HEK293 (cell line): ENCODE measurements at regions of chr10 and their contacts with region 1.

Region 1: DNA sequence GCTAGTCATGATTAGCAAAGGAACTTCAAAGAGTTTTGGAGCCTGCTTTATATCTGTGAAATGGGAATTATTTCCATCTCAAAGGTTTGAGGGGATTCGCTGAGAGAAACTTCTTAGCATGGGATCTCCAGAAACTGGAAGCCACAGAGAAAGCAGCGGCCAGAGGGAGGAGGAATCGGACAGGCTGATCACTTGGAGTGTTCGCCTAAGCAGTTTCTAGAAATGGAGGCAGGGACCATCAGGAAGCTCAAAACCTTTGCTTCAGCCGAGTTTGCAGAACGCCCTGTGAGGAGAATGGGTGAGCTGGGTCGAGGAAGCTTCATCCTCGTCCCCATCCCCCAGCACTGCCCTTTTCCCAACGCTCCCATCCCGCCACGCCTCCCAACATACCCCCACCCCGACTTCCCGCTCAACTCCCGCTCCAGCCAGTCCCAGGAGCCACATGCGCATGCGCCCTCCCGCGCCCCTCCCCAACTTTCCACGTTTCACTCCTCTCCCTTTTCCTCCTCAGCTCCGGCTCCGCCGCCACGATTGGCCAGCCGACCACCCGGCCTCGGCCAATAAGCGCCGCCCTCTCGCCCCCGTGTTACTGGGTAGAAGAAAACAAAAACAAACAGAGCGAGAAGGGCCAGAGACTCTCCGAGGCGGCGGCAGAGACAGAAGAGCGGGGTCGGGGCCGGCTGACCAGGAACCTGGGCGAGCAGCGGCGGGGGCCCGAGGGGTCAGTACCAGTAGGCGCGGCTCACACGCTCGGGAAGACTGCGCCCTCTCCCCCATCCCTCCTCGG is at the start of gene PDCD4:
- H3K4me3 ChIP-seq: peak within 1 kb of the TSS; percentile 84
- H3K27ac ChIP-seq: peak within 1 kb of the TSS; percentile 84
- H3K4me1 ChIP-seq: peaks cover 15% of the 10 kb centered on the region
- CTCF ChIP-seq: no peak

Region 2: GRCh38 chr10:110803830-110804338 is 67.6 kb before region 1 on chr10:
- CTCF ChIA-PET with region 1: interaction called, 3 read pairs
- POLR2A ChIA-PET with region 1: interaction called, 12 read pairs
- H3K4me3 ChIP-seq: no peak overlapping the region
- H3K27ac ChIP-seq: no peak overlapping the region
- H3K4me1 ChIP-seq: peaks cover 12% of the 10 kb centered on the region
- CTCF ChIP-seq: peak; percentile 58; the same call in 1 of the 2 replicates

Region 3: DNA sequence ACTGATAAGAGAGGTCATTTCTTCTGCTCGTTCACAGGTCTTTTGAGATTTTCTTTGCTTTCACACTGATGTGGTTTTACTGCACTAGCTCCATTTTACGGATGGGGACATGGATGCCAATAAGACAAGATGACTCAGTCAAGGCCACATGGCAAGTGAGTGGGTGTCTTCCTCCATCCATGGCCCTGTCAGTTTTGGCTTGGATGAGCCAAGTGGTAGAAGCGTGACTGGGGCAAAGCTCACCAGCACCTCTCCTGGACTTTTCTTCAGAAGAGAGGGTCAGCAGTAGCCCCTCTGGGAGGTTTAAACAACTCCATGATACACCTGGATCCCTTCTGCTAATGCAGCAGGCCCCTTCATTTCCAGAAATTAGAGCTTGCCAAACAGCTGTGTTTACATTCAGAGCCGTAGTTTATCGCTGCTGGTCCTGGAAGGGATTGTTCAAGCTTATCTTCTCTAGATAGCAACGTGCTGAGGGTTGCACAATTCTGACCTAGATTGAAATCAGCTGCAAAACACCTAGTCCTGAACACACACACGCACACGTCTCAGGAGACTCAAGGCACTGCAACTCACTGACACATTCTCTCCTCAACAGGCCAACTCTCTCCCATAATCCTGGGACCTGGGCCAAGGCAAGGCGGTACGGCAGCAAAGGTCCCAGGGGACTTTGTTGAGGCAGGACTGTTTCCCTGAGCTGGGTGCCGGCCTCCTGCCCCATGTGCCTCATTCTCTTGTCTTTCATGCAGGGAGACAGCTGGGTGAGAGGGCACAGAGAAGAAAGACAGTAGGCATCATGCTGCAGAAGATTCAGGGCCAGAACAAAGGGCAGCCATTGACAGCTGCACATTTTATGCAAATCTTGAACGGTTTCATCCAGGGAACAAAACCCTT is 14.0 kb before region 1 on chr10:
- CTCF ChIA-PET with region 1: interaction called, 3 read pairs
- POLR2A ChIA-PET with region 1: interaction called, 26 read pairs
- H3K4me3 ChIP-seq: no peak overlapping the region
- H3K27ac ChIP-seq: peak overlapping the region; percentile 70
- H3K4me1 ChIP-seq: peaks cover 13% of the 10 kb centered on the region
- CTCF ChIP-seq: 0 out of 2 replicates have a peak, but pooled peaks have one; percentile 19

Region 4: DNA sequence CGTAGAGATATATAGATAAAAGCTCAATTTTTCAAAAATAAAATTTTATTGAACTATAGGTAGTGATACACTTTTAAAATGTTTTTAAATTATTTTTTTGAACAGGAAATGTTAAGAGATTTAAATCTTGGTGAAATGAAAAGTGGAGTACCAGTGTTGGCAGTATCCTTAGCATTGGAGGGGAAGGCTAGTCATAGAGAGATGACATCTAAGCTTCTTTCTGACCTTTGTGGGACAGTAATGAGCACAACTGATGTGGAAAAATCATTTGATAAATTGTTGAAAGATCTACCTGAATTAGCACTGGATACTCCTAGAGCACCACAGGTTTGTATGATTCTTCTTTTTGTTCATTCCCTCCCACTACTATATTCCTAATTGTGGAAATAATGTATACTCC is 16.1 kb after region 1 on chr10:
- CTCF ChIA-PET with region 1: interaction called, 3 read pairs
- POLR2A ChIA-PET with region 1: interaction called, 10 read pairs
- H3K4me3 ChIP-seq: no peak overlapping the region
- H3K27ac ChIP-seq: no peak overlapping the region
- H3K4me1 ChIP-seq: no peaks in the 10 kb centered on the region
- CTCF ChIP-seq: no peak

Region 5: GRCh38 chr10:110918643-110919363 is 47.3 kb after region 1 on chr10 and contains the start of gene BBIP1:
- CTCF ChIA-PET with region 1: no interaction called
- POLR2A ChIA-PET with region 1: interaction called, 15 read pairs
- H3K4me3 ChIP-seq: peak within 1 kb of the TSS; percentile 96
- H3K27ac ChIP-seq: peak within 1 kb of the TSS; percentile 88
- H3K4me1 ChIP-seq: peaks cover 30% of the 10 kb centered on the region
- CTCF ChIP-seq: no peak